AG04449 (cell line): ENCODE measurements at regions of chr6 and their contacts with region 1.

Region 1: DNA sequence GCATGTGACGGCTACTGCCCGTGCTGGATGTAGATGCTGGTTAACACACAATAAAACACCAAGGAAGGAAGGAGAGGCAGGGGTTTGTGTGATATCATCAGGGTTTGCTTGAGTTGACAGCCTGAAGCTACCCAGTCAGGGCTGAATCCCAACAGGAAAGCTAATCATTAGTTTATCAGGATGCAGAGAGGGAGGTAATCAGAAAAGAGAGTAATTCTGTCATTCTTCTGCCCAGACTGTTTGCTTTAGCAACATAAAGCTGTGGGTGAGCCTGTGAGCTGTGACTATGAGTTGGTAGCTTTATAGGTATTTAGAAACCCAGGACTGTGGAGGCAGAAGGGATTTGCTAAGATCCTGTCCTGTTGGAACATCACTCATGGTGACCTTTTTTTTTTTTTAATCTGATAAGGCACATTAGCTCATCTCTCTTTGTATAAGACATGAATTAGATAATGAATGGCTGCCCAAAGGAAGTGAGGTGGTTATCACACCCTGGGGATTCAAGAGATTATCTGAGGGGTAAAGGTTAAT is 79.3 kb downstream of the CAP2 start:
- DNase-seq: no peak
- H3K4me3 ChIP-seq: no peak overlapping the region
- CTCF ChIP-seq: no peak

Region 2: GRCh38 chr6:17454316-17455005 is 18.3 kb before region 1 on chr6:
- CTCF ChIA-PET with region 1: no interaction called
- POLR2A ChIA-PET with region 1: interaction called, 10 read pairs
- DNase-seq: peak; percentile 94
- H3K4me3 ChIP-seq: peak overlapping the region; percentile 1
- CTCF ChIP-seq: no peak

Region 3: GRCh38 chr6:17525637-17526036 is 52.9 kb after region 1 on chr6:
- CTCF ChIA-PET with region 1: no interaction called
- POLR2A ChIA-PET with region 1: no interaction called
- DNase-seq: no peak
- H3K4me3 ChIP-seq: no peak overlapping the region
- CTCF ChIP-seq: no peak

Region 4: GRCh38 chr6:17892097-17892686 is 419.5 kb after region 1 on chr6:
- CTCF ChIA-PET with region 1: no interaction called
- POLR2A ChIA-PET with region 1: no interaction called
- DNase-seq: no peak
- H3K4me3 ChIP-seq: no peak overlapping the region
- CTCF ChIP-seq: no peak